CD14-positive monocyte (primary cell): ENCODE measurements at regions of chr5 and their contacts with region 1.

Region 1: DNA sequence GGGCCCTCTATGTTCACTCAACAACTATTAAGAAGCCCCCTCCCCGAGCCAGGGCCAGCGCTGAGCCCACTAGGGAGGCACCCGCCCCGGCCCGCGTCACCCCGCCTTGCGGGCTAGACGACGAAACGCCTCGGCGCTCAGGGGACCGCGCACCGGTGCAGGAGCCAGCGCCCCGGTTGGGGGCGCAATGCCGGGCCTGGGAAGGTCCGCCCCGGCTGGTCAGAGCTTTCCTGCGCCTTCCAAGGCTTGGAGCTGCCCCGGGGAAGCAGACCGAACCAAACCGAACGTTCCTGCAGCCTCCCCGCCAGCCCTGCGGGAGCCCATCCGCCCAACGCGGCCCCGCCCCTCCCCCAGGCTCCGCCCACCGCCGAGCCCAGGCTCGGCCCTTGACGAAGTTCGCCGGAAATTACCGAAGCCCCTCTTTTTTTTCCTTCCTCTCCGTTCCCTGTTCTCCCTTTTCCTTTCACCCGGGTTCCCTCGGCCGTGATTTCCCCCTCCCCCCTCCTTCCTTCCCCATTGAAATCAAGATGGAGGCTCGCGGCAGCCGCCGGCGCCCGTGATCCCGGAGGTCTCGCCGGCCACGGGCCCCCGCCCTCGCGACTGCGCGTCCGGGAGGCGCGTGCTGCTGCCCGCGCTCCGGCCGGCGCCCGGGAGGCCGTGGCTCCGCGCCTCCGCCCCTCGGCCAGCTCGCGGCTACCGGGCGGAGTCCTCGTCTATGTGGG is at the start of gene TRIO:
- DNase-seq: peak; percentile 71 to 75 (median 71)
- H3K4me3 ChIP-seq: peak within 1 kb of the TSS; percentile 75 to 91 (median 86)
- H3K4me3 Mint-ChIP-seq: peak within 1 kb of the TSS; percentile 91 to 92
- H3K27ac ChIP-seq: peak within 1 kb of the TSS; percentile 54 to 85
- H3K27ac Mint-ChIP-seq: peak within 1 kb of the TSS; percentile 69 to 95 (median 92)
- H3K4me1 ChIP-seq: peaks cover 19 to 32% of the 10 kb centered on the region in 2 donors
- H3K4me1 Mint-ChIP-seq: peaks cover 27% of the 10 kb centered on the region
- H3K27me3 ChIP-seq: peaks cover 0 to 6% of the 10 kb centered on the region in 2 donors
- H3K27me3 Mint-ChIP-seq: peaks cover 4 to 15% (median 9%) of the 10 kb centered on the region in 3 donors
- CTCF ChIP-seq: peak; percentile 45
- polyA plus RNA-seq, gene TRIO: 1.7 to 45.8 (median 2.1) TPM

Region 2: DNA sequence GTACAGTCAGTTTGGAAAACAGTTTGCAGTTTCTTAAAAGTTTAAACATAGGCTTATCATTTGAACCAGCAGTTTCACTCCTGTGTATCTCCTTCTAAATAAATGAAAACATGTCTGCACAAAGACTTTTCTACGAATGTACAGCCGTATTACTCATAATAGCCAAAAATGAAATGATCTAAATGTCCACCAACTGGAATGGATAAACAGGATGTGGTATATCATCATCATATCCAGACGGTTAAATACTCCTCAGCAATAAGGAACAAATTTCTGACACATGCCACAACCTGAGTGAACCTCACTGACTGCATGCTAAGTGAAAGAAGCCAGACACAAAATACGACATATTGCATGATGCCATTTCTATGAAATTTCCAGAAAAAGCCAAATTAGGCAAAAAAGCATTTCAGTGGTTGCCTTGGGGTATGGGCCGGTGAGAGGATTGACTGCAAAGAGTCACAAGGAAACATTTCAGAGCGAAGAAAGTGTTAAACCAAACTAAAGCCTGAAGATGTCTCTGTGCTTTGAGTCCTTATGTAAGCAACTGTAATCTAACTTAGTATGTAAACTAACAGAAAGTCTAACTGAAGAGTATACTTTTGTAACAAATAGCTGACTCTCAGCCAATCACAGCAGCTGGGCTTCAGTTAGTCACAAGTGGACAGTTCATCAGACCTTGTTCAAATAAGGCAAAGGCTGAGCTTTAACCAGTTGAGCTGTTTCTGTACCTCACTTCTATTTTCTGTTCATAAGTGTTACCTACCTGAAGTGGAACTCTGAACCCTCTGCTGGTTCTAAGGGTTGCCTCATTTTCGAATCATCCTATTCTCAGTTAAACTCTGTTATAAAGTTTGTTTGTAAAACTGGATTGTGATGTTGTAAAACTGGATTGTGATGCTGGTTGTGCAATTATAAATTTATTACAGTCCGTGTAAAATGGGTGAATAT is 65.4 kb after region 1 on chr5:
- intact Hi-C with region 1: loop called (anchors 5 to 10 kb)
- DNase-seq: peak; percentile 67 to 73 (median 68)
- H3K4me3 ChIP-seq: no peak overlapping the region
- H3K4me3 Mint-ChIP-seq: no peak overlapping the region
- H3K27ac ChIP-seq: peak overlapping the region in 1 of 2 donors; percentile 68
- H3K27ac Mint-ChIP-seq: peak overlapping the region in 5 of 7 donors; percentile 5 to 87 (median 73)
- H3K4me1 ChIP-seq: peaks cover 32 to 57% of the 10 kb centered on the region in 2 donors
- H3K4me1 Mint-ChIP-seq: peaks cover 71% of the 10 kb centered on the region
- H3K27me3 ChIP-seq: no peaks in the 10 kb centered on the region
- H3K27me3 Mint-ChIP-seq: peaks cover 0 to 4% (median 0%) of the 10 kb centered on the region in 3 donors
- CTCF ChIP-seq: peak; percentile 24